ENCODE measurements at regions of chr5 and their contacts with region 1.

Region 1: DNA sequence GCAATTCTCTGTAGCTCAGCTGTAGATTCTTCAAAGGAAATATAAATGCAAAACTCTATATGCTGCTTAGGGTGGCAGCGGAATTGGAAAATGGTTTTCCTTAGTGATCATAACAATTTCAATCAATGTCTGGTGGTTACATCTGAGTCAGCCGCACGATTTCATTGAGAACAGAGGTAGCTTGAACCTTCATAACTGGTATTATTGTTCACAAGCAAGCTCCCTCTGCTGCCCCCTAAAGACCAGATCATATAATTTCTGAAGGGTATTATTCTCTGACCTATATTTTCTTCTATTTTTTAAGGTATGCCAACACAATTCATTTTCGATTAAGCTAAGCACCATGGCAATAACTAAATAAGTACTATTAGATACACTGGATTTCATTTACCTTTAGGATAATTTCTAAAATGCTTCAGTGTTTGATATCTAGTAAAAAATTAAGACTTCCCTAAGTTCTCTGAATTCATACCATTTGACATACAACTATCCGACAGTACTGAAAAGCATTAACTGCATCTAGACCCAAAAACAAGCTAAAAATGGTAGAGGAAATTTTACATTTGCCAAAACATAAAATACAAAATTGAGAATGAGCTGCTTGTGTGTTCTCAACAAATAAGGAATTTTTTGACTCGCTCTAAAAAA is 181.1 kb upstream of the SPEF2 start:
- DNase-seq: no peak
- H3K4me3 ChIP-seq: no peak overlapping the region
- H3K27ac ChIP-seq: no peak overlapping the region
- H3K4me1 ChIP-seq: no peaks in the 10 kb centered on the region
- H3K27me3 ChIP-seq: no peaks in the 10 kb centered on the region
- CTCF ChIP-seq: peak in 2 of 3 experiments; percentile 24 to 48; a peak in 1 of 4 replicates
- EP300 ChIP-seq: no peak
- POLR2A ChIP-seq: no peak
- RAD21 ChIP-seq: peak; percentile 29 to 47; a peak in 3 of 4 replicates

Region 2: GRCh38 chr5:35416217-35416988 is 20.1 kb before region 1 on chr5:
- CTCF ChIA-PET with region 1: interaction called, 14 read pairs
- POLR2A ChIA-PET with region 1: no interaction called
- DNase-seq: no peak
- H3K4me3 ChIP-seq: no peak overlapping the region
- H3K27ac ChIP-seq: no peak overlapping the region
- H3K4me1 ChIP-seq: no peaks in the 10 kb centered on the region
- H3K27me3 ChIP-seq: no peaks in the 10 kb centered on the region
- CTCF ChIP-seq: no peak
- EP300 ChIP-seq: no peak
- POLR2A ChIP-seq: no peak
- RAD21 ChIP-seq: no peak

Region 3: DNA sequence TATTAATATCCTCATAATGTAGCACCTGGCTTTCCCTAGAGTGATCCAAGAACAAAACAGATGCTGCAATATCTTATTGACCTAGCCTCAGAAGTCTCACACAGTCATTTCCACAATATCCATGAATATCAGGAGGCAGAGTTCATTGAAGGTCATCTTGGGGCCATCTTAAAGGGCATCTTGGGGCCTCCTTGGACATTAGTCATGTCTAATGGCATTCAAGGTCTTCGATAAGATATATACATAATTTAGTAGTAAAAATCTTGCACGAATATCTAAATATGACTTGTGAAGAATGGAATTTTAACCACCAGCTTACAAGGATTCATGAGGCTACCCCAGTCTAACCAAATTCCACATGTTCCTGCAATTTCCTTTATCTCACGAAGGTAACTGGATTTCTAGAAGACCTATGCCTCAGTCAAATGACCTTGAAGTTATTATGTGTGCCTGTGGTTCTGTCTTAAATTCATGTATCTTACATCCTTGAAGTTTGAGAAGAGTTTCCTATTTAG is 17.5 kb after region 1 on chr5:
- CTCF ChIA-PET with region 1: interaction called, 14 read pairs
- POLR2A ChIA-PET with region 1: no interaction called
- DNase-seq: no peak
- H3K4me3 ChIP-seq: no peak overlapping the region
- H3K27ac ChIP-seq: no peak overlapping the region
- H3K4me1 ChIP-seq: no peaks in the 10 kb centered on the region
- H3K27me3 ChIP-seq: no peaks in the 10 kb centered on the region
- CTCF ChIP-seq: no peak
- EP300 ChIP-seq: no peak
- POLR2A ChIP-seq: no peak
- RAD21 ChIP-seq: no peak